ENCODE measurements at regions of chr14 and their contacts with region 1.

Region 1: GRCh38 chr14:65412032-65412846 is at the start of gene FUT8:
- DNase-seq: peak; percentile 94
- H3K4me3 Mint-ChIP-seq: peak within 1 kb of the TSS; percentile 92
- H3K27ac Mint-ChIP-seq: peak within 1 kb of the TSS; percentile 95
- H3K4me1 Mint-ChIP-seq: peaks cover 32% of the 10 kb centered on the region
- H3K27me3 Mint-ChIP-seq: no peaks in the 10 kb centered on the region
- total RNA-seq, gene FUT8: 34.6 to 38.7 TPM

Region 2: DNA sequence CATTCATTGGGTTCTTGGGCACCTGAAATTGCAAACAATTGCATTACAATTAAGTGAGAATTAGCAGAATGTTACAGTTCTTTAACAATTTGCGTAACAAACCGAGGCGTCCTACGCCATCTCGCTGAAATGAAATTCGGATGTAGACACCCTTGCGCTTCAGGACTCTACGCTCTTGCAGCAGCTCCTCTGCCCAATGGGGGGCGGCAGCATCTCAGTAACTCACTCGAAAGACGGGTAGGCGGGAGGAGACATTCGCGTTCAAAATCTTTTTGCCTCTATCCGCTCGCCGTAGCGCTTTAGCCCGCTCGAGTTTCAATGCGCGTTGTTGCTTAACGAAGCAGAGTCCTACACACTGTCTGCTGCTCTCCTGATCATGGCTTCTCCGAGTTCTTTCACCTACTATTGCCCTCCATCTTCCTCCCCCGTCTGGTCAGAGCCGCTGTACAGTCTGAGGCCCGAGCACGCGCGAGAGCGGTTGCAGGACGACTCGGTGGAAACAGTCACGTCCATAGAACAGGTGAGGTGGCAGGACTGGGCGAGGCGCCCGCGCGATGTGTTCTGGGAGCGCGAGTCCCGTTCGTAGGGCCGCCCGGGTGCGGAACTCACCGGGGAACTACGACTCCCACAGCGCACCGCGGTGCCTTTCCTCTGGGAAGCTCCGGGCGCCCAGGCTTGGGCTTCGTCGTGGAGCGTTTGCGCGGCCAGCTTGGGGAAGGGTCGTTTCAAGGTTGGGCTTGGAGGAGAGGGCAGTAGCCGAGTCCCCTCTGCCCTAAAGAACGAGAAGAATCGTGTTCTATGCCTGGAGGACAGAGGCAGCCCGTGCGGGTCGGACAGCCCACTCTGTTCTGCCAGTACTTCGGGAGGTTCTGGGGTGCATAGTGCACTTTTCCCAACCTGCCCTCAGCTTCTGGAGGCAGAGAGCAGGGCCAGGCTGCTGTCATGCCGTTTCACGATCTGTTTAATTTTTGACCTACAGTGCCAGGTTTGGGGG is 425.4 kb before region 1 on chr14 and contains the start of gene FNTB:
- CTCF ChIA-PET with region 1: no interaction called
- intact Hi-C with region 1: loop called (anchors 1 kb)
- DNase-seq: peak; percentile 96
- H3K4me3 Mint-ChIP-seq: peak within 1 kb of the TSS; percentile 93
- H3K27ac Mint-ChIP-seq: peak within 1 kb of the TSS; percentile 96
- H3K4me1 Mint-ChIP-seq: peaks cover 28% of the 10 kb centered on the region
- H3K27me3 Mint-ChIP-seq: no peaks in the 10 kb centered on the region
- total RNA-seq, gene FNTB: 7.9 to 10.0 TPM

Region 3: GRCh38 chr14:65206448-65207096 is 205.7 kb before region 1 on chr14:
- CTCF ChIA-PET with region 1: interaction called, 7 read pairs
- intact Hi-C with region 1: loop called (anchors 1 kb)
- DNase-seq: peak; percentile 29
- H3K4me3 Mint-ChIP-seq: peak overlapping the region; percentile 6
- H3K27ac Mint-ChIP-seq: peak overlapping the region; percentile 71
- H3K4me1 Mint-ChIP-seq: peaks cover 62% of the 10 kb centered on the region
- H3K27me3 Mint-ChIP-seq: peaks cover 3% of the 10 kb centered on the region

Region 4: GRCh38 chr14:65287264-65288131 is 124.7 kb before region 1 on chr14:
- CTCF ChIA-PET with region 1: interaction called, 12 read pairs
- intact Hi-C with region 1: loop called (anchors 1 kb)
- DNase-seq: peak; percentile 66
- H3K4me3 Mint-ChIP-seq: peak overlapping the region; percentile 74
- H3K27ac Mint-ChIP-seq: peak overlapping the region; percentile 98
- H3K4me1 Mint-ChIP-seq: peaks cover 64% of the 10 kb centered on the region
- H3K27me3 Mint-ChIP-seq: no peaks in the 10 kb centered on the region

Region 5: GRCh38 chr14:65478596-65478995 is 66.4 kb after region 1 on chr14:
- CTCF ChIA-PET with region 1: interaction called, 13 read pairs
- intact Hi-C with region 1: loop called (anchors 5 kb)
- DNase-seq: peak; percentile 13
- H3K4me3 Mint-ChIP-seq: no peak overlapping the region
- H3K27ac Mint-ChIP-seq: no peak overlapping the region
- H3K4me1 Mint-ChIP-seq: peaks cover 61% of the 10 kb centered on the region
- H3K27me3 Mint-ChIP-seq: no peaks in the 10 kb centered on the region

Region 6: GRCh38 chr14:65824285-65824977 is 412.2 kb after region 1 on chr14:
- CTCF ChIA-PET with region 1: interaction called, 71 read pairs
- intact Hi-C with region 1: loop called (anchors 1 kb)
- DNase-seq: peak; percentile 78
- H3K4me3 Mint-ChIP-seq: no peak overlapping the region
- H3K27ac Mint-ChIP-seq: no peak overlapping the region
- H3K4me1 Mint-ChIP-seq: peaks cover 5% of the 10 kb centered on the region
- H3K27me3 Mint-ChIP-seq: no peaks in the 10 kb centered on the region

Measured in activated naive CD4-positive, alpha-beta T cell treated with anti-CD3 and anti-CD28 coated beads for 36 hours (primary cell).